Left cardiac atrium (tissue), 4 donors: ENCODE measurements at regions of chr11 and their contacts with region 1.

Region 1: DNA sequence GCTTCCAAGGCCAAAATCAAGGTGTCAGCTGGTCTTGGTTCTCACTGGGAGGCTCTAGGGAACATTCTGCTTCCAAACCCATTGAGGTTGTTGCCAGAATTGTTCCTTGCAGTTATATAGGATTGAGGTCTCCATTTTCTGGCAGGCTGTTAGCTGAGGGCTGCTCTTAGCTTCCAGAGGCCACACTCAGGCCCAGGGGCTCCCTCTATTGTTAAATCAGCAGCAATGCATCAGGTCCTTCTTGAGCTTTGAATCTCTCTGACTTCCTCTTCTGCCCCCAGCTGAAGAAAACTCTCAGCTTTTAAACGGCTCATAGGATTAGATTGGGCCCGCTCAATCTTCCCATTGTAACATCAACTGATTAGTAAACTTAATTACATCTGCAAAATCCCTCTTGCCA is 39.3 kb upstream of the BSX start:
- DNase-seq: no peak
- ATAC-seq: peak in 1 of 2 donors; percentile 38

Region 2: GRCh38 chr11:122778148-122778547 is 242.8 kb before region 1 on chr11:
- intact Hi-C with region 1: no loop called
- DNase-seq: no peak
- ATAC-seq: no peak

Region 3: GRCh38 chr11:122910775-122911174 is 110.2 kb before region 1 on chr11:
- intact Hi-C with region 1: loop called in 1 of 2 experiments (anchors 10 kb)
- DNase-seq: no peak
- ATAC-seq: no peak

Region 4: DNA sequence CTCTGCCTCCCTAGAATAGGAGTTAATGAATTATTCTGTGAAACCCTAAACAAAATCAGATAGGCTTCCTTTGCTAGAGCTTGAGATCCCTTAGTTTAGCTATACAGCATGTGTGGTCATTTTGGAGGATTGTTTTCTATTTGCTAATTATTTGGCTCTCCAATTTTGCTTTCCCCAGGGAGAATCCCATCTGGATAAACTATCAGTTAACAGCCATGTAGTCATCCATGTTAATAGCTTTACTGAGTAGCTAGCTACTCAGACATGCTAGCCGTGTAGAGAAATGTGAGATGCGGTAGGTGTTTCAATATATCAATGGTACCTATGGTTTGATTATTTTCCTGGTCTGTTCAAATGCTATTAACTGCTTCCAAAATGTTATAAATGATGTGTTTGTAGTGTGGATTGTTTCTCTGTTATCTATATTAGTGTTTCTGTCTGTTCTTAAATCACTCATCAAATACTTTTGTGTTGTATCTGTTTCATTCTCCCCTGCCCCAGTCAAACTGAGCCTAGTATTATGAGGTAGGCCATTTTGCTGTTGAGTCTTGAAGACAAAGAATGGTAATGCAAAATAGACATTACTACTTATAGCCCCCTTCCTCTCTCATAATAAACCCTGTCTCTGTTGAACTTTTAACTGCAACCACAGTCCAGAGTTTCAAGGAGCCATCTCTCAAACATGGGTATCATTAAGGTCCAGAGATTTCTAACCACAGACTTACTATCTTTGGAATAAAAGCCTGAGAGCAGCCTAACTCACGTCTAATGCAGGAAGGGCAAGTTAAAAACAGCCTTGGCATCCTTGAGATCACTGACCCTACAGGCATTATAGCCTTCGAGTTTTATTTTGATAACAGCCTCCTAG is 353.0 kb after region 1 on chr11:
- intact Hi-C with region 1: no loop called
- DNase-seq: no peak
- ATAC-seq: no peak